Calu3 (cell line): ENCODE measurements at regions of chr15 and their contacts with region 1.

Region 1: GRCh38 chr15:64895285-64896065 is 16.2 kb upstream of the ANKDD1A start:
- DNase-seq: no peak
- H3K4me3 Mint-ChIP-seq: no peak overlapping the region
- H3K27ac Mint-ChIP-seq: no peak overlapping the region
- H3K4me1 Mint-ChIP-seq: no peaks in the 10 kb centered on the region
- H3K27me3 Mint-ChIP-seq: peaks cover 11% of the 10 kb centered on the region
- CTCF ChIP-seq: no peak

Region 2: DNA sequence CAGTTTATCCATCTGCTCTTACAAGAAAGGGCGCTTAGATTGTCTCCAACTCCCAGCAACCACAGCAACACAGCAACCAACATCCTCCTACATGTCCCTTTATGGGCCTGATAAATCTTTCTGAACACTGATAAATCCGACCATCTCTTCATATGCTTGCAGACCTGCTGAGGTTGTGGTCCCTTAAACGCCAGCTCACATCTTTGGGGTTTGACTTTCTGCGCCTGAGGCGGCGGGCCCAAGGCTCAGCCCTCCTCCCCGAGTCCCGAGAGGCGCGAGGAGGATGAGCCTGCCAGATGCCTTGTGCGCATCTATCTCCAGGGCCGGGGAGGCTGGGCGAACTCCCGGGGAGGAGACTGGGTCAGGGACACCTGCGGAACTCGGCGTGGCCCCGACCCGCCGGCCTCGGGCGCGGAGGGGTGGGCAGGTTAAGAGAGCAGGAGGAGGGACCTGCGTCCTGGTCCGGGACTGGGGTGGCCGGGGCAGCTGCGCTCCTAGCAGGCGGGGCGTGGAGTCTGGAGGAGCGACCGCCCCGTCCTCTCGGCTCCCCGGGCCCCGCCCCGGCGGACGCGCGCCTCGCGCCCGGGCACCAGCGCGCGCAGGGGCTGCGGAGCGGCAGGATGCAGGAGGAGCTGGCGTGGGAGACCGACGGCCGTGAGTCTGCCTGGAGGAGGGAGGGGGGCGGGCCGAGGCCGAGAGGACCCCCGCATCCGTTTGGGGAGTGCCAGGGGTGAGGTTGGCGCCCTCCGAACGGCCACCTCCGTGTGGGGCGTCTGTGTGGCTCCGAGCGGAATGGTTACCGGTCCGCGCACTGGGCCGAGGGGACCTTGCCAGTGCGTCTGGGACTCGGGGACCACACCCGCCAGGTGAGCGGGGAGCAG is 16.1 kb after region 1 on chr15 and contains the start of gene ANKDD1A:
- CTCF ChIA-PET with region 1: no interaction called
- intact Hi-C with region 1: no loop called
- DNase-seq: peak; percentile 70
- H3K4me3 Mint-ChIP-seq: peak within 1 kb of the TSS; percentile 80
- H3K27ac Mint-ChIP-seq: no peak within 1 kb of the TSS
- H3K4me1 Mint-ChIP-seq: peaks cover 8% of the 10 kb centered on the region
- H3K27me3 Mint-ChIP-seq: peaks cover 87% of the 10 kb centered on the region
- CTCF ChIP-seq: no peak
- total RNA-seq, gene ANKDD1A: 0.37 and 0.42 TPM in 2 replicates

Region 3: DNA sequence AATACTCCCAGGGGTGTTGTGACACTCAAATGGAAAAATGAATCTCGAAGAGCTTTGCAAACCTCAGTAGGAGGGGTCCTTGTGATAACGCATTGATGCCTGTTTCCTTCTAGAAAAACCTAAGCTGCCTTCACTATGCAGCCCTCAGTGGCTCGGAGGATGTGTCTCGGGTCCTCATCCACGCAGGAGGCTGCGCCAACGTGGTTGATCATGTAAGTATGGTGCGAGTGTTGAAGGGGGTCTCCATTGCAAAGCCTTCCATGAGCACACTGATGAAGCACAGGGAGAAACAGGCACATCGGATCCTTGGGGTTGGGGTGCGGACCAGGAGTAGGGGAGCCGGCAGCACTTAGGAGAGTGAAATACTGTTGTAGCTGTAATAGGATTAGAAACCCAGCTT is 38.5 kb after region 1 on chr15:
- CTCF ChIA-PET with region 1: interaction called, 3 read pairs
- intact Hi-C with region 1: loop called (anchors 1 kb)
- DNase-seq: no peak
- H3K4me3 Mint-ChIP-seq: no peak overlapping the region
- H3K27ac Mint-ChIP-seq: no peak overlapping the region
- H3K4me1 Mint-ChIP-seq: peaks cover 28% of the 10 kb centered on the region
- H3K27me3 Mint-ChIP-seq: peaks cover 23% of the 10 kb centered on the region
- CTCF ChIP-seq: no peak

Region 4: GRCh38 chr15:64979252-64979710 is 83.8 kb after region 1 on chr15:
- CTCF ChIA-PET with region 1: no interaction called
- intact Hi-C with region 1: no loop called
- DNase-seq: no peak
- H3K4me3 Mint-ChIP-seq: no peak overlapping the region
- H3K27ac Mint-ChIP-seq: no peak overlapping the region
- H3K4me1 Mint-ChIP-seq: no peaks in the 10 kb centered on the region
- H3K27me3 Mint-ChIP-seq: no peaks in the 10 kb centered on the region
- CTCF ChIP-seq: no peak